ENCODE measurements at regions of chr3 and their contacts with region 1.

Region 1: DNA sequence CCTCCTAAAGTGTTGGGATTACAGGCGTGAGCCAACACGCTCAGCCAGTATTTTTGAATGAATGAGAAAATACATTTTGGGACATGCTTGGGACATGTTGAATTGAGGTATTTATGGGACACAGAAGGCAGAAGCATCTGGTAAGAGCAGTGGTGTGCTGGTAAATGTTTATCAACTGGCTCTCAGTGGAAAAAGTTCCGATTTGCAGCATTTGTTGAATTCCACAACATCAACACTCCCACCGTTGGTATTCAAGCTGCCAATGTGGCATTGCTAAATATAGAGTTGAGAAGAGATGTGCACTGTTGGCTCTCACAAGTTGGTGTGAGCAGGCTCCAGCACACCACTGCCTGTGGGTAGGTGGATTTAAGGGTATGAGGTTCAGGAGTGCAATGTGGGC is 35.8 kb upstream of the LRRFIP2 start:
- DNase-seq: no peak
- H3K4me3 Mint-ChIP-seq: no peak overlapping the region
- H3K27ac Mint-ChIP-seq: no peak overlapping the region
- H3K4me1 Mint-ChIP-seq: peaks cover 3% of the 10 kb centered on the region
- H3K27me3 Mint-ChIP-seq: no peaks in the 10 kb centered on the region

Region 2: DNA sequence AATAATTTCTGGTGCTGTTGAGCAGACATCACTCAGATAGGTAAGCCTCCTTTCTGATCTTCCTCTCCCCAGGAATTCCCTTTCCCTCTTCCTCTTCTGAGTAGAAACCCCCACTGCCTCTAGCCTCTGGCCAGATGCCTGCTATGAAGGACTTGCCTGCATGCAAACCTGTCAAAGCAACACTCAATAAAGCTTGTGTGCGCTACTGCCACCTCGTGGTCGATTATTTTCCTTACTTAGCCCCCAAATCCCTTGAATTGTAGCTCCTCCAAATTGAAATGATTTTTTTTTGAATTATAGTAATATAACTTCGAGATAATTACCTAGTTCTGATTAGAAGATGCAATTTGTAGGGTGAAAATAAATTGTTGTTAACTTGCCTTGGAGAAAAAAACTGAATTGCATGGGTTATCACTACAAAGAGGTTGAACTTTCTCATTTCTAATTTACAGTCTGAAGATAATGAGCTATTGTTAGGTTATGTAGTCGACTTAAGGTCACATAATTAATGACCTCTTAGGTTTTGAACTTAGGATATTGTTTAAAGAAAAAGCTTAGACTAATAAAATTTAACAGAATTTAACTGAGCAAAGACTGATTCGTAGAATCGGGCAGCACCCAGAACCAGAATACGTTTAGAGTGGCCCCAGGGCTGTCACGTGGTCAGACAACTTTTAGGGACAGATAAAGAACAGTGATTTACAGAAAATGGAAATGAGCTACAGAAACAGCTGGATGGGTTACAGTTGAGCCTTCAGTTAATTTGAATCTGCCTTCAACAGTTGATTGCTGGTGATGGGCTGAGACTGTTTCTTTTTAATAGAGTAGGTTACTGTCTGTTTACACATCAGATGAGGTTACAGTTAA is 1301.6 kb before region 1 on chr3:
- CTCF ChIA-PET with region 1: no interaction called
- POLR2A ChIA-PET with region 1: no interaction called
- intact Hi-C with region 1: no loop called
- DNase-seq: peak; percentile 53
- H3K4me3 Mint-ChIP-seq: no peak overlapping the region
- H3K27ac Mint-ChIP-seq: no peak overlapping the region
- H3K4me1 Mint-ChIP-seq: no peaks in the 10 kb centered on the region
- H3K27me3 Mint-ChIP-seq: no peaks in the 10 kb centered on the region

Region 3: DNA sequence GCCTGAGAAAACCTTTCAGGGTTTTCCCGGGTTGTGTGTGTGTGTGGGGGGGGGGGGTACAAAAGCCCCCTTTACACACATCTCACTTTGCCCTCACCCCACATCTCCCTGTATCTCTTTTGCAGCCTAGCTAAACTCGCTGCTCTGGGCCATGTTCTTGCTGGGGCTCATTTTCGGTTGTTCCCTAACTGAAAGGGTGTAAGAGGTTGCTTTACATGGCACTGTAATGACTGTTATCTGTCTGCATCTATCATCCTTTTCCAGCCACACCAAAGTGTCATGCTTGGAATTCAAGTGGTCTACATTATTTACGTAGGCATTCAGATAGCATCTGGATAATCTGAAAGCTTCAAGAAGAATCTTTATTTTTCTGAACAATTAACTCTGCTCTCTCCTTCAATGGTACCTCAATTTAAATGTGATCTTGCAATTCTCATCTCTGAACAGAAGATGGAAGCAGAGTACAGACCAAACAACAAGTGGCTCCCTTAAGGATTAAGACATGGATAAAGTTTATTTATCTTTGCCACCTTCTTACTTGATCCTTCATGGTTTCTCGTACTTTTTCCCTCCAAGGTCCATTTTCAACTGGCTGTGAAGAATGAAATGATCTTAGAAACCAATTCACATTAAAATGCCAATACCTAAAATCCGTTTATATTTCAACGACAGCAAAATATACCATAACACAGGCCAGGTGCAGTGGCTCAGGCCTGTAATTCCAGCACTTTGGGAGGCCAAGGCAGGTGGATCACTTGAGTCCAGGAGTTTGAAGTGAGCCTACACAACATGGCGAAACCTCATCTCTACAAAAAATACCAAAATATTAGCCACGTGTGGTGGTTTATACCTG is 480.8 kb before region 1 on chr3:
- CTCF ChIA-PET with region 1: no interaction called
- POLR2A ChIA-PET with region 1: no interaction called
- intact Hi-C with region 1: loop called (anchors 5 kb)
- DNase-seq: no peak
- H3K4me3 Mint-ChIP-seq: no peak overlapping the region
- H3K27ac Mint-ChIP-seq: no peak overlapping the region
- H3K4me1 Mint-ChIP-seq: no peaks in the 10 kb centered on the region
- H3K27me3 Mint-ChIP-seq: peaks cover 6% of the 10 kb centered on the region

Region 4: DNA sequence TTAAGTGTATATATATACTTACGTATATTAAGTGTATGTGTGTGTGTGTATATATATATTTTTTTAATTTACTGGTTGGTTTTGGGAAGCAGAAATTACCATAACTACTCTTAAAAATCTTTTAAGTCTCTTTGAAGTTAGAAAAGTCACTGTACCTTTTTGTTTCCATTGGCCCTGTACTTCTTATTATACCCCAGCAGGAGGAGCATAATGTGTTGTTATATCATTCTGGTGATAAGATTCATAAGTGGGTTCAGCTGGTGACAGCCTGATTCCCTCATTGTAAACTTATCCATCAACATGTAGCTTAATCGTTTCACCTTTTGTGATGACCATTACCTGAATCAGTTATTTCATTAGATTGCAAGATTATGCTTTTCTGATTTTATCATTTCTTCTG is 186.1 kb before region 1 on chr3:
- CTCF ChIA-PET with region 1: interaction called, 27 read pairs
- POLR2A ChIA-PET with region 1: no interaction called
- intact Hi-C with region 1: loop called (anchors 1 kb)
- DNase-seq: no peak
- H3K4me3 Mint-ChIP-seq: no peak overlapping the region
- H3K27ac Mint-ChIP-seq: no peak overlapping the region
- H3K4me1 Mint-ChIP-seq: peaks cover 6% of the 10 kb centered on the region
- H3K27me3 Mint-ChIP-seq: no peaks in the 10 kb centered on the region

Region 5: DNA sequence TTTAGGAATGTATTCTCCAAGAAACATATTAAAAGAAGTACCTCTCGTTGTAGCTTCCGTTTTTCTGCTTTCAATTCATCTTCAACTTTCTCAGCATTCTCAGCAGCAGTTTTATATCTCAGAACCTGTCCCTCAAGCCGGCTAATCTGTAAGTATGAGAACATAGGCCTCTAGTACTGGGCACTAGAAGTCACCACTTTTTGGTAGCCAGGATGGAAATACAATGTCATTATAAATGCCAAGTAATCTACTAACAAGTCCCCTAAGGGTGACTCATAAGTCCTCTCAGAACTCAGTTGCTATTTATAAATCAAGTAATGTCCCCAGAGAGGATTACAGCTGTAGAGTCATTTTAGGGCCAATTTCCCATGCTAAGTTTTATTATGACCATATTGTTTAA is 155.9 kb before region 1 on chr3:
- CTCF ChIA-PET with region 1: interaction called, 3 read pairs
- POLR2A ChIA-PET with region 1: no interaction called
- intact Hi-C with region 1: loop called (anchors 1 kb)
- DNase-seq: no peak
- H3K4me3 Mint-ChIP-seq: no peak overlapping the region
- H3K27ac Mint-ChIP-seq: peak overlapping the region; percentile 88
- H3K4me1 Mint-ChIP-seq: peaks cover 10% of the 10 kb centered on the region
- H3K27me3 Mint-ChIP-seq: no peaks in the 10 kb centered on the region

Region 6: GRCh38 chr3:37174532-37175126 is 35.6 kb before region 1 on chr3 and contains the start of gene LRRFIP2:
- CTCF ChIA-PET with region 1: interaction called, 3 read pairs
- POLR2A ChIA-PET with region 1: no interaction called
- intact Hi-C with region 1: loop called (anchors 1 kb)
- DNase-seq: peak; percentile 41
- H3K4me3 Mint-ChIP-seq: peak within 1 kb of the TSS; percentile 83
- H3K27ac Mint-ChIP-seq: peak within 1 kb of the TSS; percentile 80
- H3K4me1 Mint-ChIP-seq: peaks cover 41% of the 10 kb centered on the region
- H3K27me3 Mint-ChIP-seq: no peaks in the 10 kb centered on the region
- total RNA-seq, gene LRRFIP2: 25.9 to 30.7 TPM

Region 7: DNA sequence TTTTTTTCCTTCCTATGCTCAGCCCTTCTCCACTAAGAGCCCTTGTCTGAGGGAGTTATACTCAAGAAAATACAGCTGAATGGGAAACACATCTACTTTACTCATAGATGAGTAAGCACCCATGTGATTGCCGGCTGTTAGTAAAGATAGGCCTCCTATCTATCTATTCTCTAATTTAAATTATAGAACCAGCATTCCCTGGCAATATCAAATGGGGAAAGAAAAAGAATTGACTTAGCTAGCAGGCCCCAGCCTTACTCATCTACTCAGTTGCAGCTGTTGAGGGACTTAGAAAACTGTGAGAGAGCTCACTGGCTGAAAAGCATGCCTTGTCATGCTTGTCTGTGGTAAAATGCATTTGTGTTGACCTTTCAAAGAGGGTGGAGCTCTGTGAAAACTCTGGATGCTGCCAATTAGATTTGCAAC is 81.1 kb after region 1 on chr3:
- CTCF ChIA-PET with region 1: no interaction called
- POLR2A ChIA-PET with region 1: no interaction called
- intact Hi-C with region 1: no loop called
- DNase-seq: no peak
- H3K4me3 Mint-ChIP-seq: no peak overlapping the region
- H3K27ac Mint-ChIP-seq: no peak overlapping the region
- H3K4me1 Mint-ChIP-seq: peaks cover 16% of the 10 kb centered on the region
- H3K27me3 Mint-ChIP-seq: no peaks in the 10 kb centered on the region

Measured in activated CD4-positive, alpha-beta memory T cell treated with anti-CD3 and anti-CD28 coated beads for 36 hours (primary cell).